ENCODE measurements at regions of chr19 and their contacts with region 1.

Region 1: DNA sequence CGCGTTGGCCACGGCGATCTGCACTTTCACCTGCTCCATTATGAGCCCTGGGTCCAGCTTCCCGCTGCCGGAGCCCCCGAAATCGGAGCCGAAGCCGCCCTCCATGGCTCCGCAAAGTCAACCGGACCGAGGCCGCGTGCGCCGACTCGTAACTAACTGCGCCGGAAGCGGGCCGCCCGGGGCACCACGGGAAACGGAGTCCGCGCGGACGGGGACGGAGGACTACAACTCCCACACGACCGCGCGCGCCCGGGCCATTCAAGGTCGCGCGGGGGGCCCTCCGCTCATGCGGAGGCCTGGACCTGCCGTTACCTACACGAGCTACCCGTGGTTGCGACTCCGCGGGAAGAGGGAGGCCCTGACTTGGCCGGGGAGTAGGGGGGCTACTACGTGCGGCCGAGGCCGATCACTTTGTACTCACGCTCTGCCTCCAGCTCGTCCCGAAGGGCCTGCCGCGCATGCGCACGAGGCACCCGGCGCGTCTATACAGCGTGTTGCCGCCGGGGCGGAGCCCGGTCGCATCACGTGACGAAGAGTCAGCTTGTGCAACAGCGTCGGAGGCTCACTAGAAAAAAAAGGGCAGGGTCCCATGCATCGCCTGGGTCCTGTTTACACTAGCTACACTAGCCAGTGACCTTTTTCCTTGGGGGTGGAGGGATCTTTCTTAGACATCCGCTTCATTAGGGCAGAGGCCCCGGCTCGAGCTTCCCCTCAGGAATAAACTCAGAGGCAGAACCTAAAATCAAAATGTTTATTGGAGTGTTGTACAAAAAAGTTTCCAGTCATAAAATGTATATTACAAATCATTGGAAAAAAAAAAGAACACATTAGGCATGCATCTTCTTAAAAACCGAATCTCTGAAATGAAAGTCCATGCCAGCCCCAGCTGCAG is at the start of gene TIMM13:
- DNase-seq: peak; percentile 97
- H3K4me3 Mint-ChIP-seq: peak within 1 kb of the TSS; percentile 93
- H3K27ac Mint-ChIP-seq: peak within 1 kb of the TSS; percentile 99
- H3K4me1 Mint-ChIP-seq: no peaks in the 10 kb centered on the region
- H3K27me3 Mint-ChIP-seq: no peaks in the 10 kb centered on the region
- CTCF ChIP-seq: no peak
- total RNA-seq, gene TIMM13: 123 and 188 TPM in 2 replicates

Region 2: DNA sequence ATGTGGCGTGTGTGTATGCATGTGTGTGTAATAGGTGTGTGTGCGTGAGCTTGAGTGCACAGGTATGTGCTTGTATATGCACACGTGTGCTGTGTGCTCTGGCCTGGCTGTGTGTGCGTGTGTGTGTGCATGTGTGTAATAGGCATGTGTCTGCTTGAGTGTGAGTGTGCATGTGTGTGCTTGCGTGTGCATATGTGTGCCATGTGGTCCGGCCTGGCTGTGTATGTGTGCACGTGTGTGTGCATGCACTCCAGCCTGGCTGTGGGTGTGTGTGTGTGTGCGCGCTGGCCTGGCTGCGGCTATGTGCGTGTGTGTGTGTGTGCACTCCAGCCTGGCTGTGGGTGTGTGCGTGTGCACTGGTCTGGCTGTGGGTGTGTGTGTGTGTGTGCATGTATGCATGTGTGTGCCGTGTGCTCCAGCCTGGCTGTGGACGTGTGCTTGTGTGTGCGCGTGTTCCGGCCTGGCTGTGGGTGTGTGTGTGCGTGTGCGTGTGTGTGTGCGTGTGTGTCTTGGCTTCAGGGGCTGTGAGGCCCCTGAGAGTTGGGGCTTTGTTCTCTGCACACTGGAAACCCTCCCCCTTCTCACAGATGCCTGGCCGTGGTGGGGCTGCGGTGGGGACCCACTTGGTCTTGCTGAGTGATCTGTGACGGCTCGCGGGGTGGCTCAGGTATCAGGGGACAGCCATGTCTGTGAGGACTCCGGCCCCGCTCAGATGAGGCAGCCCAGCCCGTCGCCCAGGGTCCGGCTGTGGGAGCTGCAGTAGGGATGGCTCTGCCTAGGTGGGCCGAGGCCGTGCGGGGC is 90.9 kb before region 1 on chr19:
- CTCF ChIA-PET with region 1: no interaction called
- POLR2A ChIA-PET with region 1: no interaction called
- intact Hi-C with region 1: no loop called
- DNase-seq: no peak
- H3K4me3 Mint-ChIP-seq: no peak overlapping the region
- H3K27ac Mint-ChIP-seq: no peak overlapping the region
- H3K4me1 Mint-ChIP-seq: no peaks in the 10 kb centered on the region
- H3K27me3 Mint-ChIP-seq: no peaks in the 10 kb centered on the region
- CTCF ChIP-seq: no peak

Region 3: GRCh38 chr19:2455851-2456570 is 28.3 kb after region 1 on chr19:
- CTCF ChIA-PET with region 1: no interaction called
- POLR2A ChIA-PET with region 1: interaction called, 43 read pairs
- intact Hi-C with region 1: no loop called
- DNase-seq: peak; percentile 30
- H3K4me3 Mint-ChIP-seq: peak overlapping the region; percentile 77
- H3K27ac Mint-ChIP-seq: peak overlapping the region; percentile 85
- H3K4me1 Mint-ChIP-seq: peaks cover 18% of the 10 kb centered on the region
- H3K27me3 Mint-ChIP-seq: no peaks in the 10 kb centered on the region
- CTCF ChIP-seq: no peak

Measured in MCF 10A (cell line).